CD4-positive, alpha-beta T cell (primary cell): ENCODE measurements at regions of chr9 and their contacts with region 1.

Region 1: GRCh38 chr9:105414947-105415661 is 32.7 kb upstream of the FSD1L start:
- DNase-seq: peak; percentile 19 to 84 (median 48)
- ATAC-seq: peak; percentile 86
- H3K4me3 ChIP-seq: no peak overlapping the region
- H3K4me3 Mint-ChIP-seq: no peak overlapping the region
- H3K27ac ChIP-seq: no peak overlapping the region
- H3K27ac Mint-ChIP-seq: no peak overlapping the region
- H3K4me1 ChIP-seq: peaks cover 3% of the 10 kb centered on the region
- H3K4me1 Mint-ChIP-seq: peaks cover 4% of the 10 kb centered on the region
- H3K27me3 ChIP-seq: peaks cover 9 to 19% of the 10 kb centered on the region in 2 experiments
- H3K27me3 Mint-ChIP-seq: peaks cover 51% of the 10 kb centered on the region
- CTCF ChIP-seq: peak; percentile 94

Region 2: DNA sequence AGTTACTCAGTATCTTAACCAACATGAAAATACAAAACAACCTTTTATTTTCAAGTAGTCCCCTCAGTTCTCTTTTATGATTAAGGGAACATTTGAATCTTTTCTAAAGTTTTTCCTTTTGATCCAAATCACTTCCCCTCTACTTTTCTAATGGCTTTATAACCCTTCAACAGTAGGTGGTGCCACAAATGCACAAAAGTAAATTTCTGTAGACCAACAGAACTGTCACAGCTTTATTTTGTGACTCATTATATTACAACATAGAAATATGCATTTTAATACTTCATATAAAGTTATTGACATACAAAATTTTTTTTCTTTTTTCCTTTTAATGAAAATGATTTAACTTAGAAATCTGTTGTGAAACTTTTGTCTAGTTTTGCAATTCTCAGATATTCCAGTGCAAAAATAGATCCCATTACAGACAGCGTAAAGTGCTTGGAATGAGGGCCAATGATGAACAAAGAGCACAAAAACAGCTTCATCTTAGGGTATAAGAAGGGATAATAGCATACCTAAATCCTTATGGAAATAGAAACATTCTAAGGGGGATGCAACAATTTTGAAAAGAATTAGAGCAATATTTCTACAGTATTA is 634.2 kb before region 1 on chr9:
- CTCF ChIA-PET with region 1: no interaction called
- POLR2A ChIA-PET with region 1: no interaction called
- intact Hi-C with region 1: loop called in 1 of 2 experiments (anchors 10 kb)
- DNase-seq: peak in 2 of 14 experiments; percentile 40 to 42
- ATAC-seq: no peak
- H3K4me3 ChIP-seq: no peak overlapping the region
- H3K4me3 Mint-ChIP-seq: no peak overlapping the region
- H3K27ac ChIP-seq: no peak overlapping the region
- H3K27ac Mint-ChIP-seq: no peak overlapping the region
- H3K4me1 ChIP-seq: no peaks in the 10 kb centered on the region
- H3K4me1 Mint-ChIP-seq: no peaks in the 10 kb centered on the region
- H3K27me3 ChIP-seq: no peaks in the 10 kb centered on the region
- H3K27me3 Mint-ChIP-seq: no peaks in the 10 kb centered on the region
- CTCF ChIP-seq: peak; percentile 34

Region 3: GRCh38 chr9:104808035-104808614 is 607.0 kb before region 1 on chr9:
- CTCF ChIA-PET with region 1: no interaction called
- POLR2A ChIA-PET with region 1: no interaction called
- intact Hi-C with region 1: loop called in 1 of 2 experiments (anchors 10 kb)
- DNase-seq: peak in 2 of 14 experiments; percentile 4 to 13
- ATAC-seq: no peak
- H3K4me3 ChIP-seq: no peak overlapping the region
- H3K4me3 Mint-ChIP-seq: no peak overlapping the region
- H3K27ac ChIP-seq: no peak overlapping the region
- H3K27ac Mint-ChIP-seq: no peak overlapping the region
- H3K4me1 ChIP-seq: no peaks in the 10 kb centered on the region
- H3K4me1 Mint-ChIP-seq: no peaks in the 10 kb centered on the region
- H3K27me3 ChIP-seq: no peaks in the 10 kb centered on the region
- H3K27me3 Mint-ChIP-seq: no peaks in the 10 kb centered on the region
- CTCF ChIP-seq: no peak

Region 4: GRCh38 chr9:104863180-104863883 is 551.8 kb before region 1 on chr9:
- CTCF ChIA-PET with region 1: interaction called, 10 read pairs
- POLR2A ChIA-PET with region 1: interaction called, 3 read pairs
- intact Hi-C with region 1: loop called (anchors 1 kb)
- DNase-seq: peak; percentile 9 to 78 (median 32)
- ATAC-seq: peak; percentile 92
- H3K4me3 ChIP-seq: no peak overlapping the region
- H3K4me3 Mint-ChIP-seq: no peak overlapping the region
- H3K27ac ChIP-seq: no peak overlapping the region
- H3K27ac Mint-ChIP-seq: no peak overlapping the region
- H3K4me1 ChIP-seq: no peaks in the 10 kb centered on the region
- H3K4me1 Mint-ChIP-seq: peaks cover 12% of the 10 kb centered on the region
- H3K27me3 ChIP-seq: no peaks in the 10 kb centered on the region
- H3K27me3 Mint-ChIP-seq: no peaks in the 10 kb centered on the region
- CTCF ChIP-seq: peak; percentile 77

Region 5: GRCh38 chr9:104927912-104928740 is 487.0 kb before region 1 on chr9 and contains the start of gene ABCA1:
- CTCF ChIA-PET with region 1: interaction called, 3 read pairs
- POLR2A ChIA-PET with region 1: no interaction called
- intact Hi-C with region 1: loop called (anchors 1 to 2 kb)
- DNase-seq: peak; percentile 57 to 89 (median 74)
- ATAC-seq: peak; percentile 81
- H3K4me3 ChIP-seq: peak within 1 kb of the TSS; percentile 69
- H3K4me3 Mint-ChIP-seq: peak within 1 kb of the TSS; percentile 92
- H3K27ac ChIP-seq: peak within 1 kb of the TSS in 1 of 2 donors; percentile 15
- H3K27ac Mint-ChIP-seq: peak within 1 kb of the TSS; percentile 86
- H3K4me1 ChIP-seq: peaks cover 27% of the 10 kb centered on the region
- H3K4me1 Mint-ChIP-seq: peaks cover 26% of the 10 kb centered on the region
- H3K27me3 ChIP-seq: no peaks in the 10 kb centered on the region
- H3K27me3 Mint-ChIP-seq: no peaks in the 10 kb centered on the region
- CTCF ChIP-seq: no peak
- total RNA-seq, gene ABCA1: 14.1 to 16.9 TPM

Region 6: GRCh38 chr9:105157130-105157583 is 257.9 kb before region 1 on chr9:
- CTCF ChIA-PET with region 1: interaction called, 4 read pairs
- POLR2A ChIA-PET with region 1: no interaction called
- intact Hi-C with region 1: loop called (anchors 1 to 2 kb)
- DNase-seq: peak in 8 of 14 experiments; percentile 1 to 68 (median 30)
- ATAC-seq: peak; percentile 80
- H3K4me3 ChIP-seq: no peak overlapping the region
- H3K4me3 Mint-ChIP-seq: no peak overlapping the region
- H3K27ac ChIP-seq: no peak overlapping the region
- H3K27ac Mint-ChIP-seq: no peak overlapping the region
- H3K4me1 ChIP-seq: peaks cover 12% of the 10 kb centered on the region
- H3K4me1 Mint-ChIP-seq: peaks cover 34% of the 10 kb centered on the region
- H3K27me3 ChIP-seq: no peaks in the 10 kb centered on the region
- H3K27me3 Mint-ChIP-seq: no peaks in the 10 kb centered on the region
- CTCF ChIP-seq: peak; percentile 72

Region 7: GRCh38 chr9:105392531-105392930 is 22.6 kb before region 1 on chr9:
- CTCF ChIA-PET with region 1: no interaction called
- POLR2A ChIA-PET with region 1: no interaction called
- intact Hi-C with region 1: no loop called
- DNase-seq: no peak
- ATAC-seq: no peak
- H3K4me3 ChIP-seq: no peak overlapping the region
- H3K4me3 Mint-ChIP-seq: no peak overlapping the region
- H3K27ac ChIP-seq: no peak overlapping the region
- H3K27ac Mint-ChIP-seq: no peak overlapping the region
- H3K4me1 ChIP-seq: no peaks in the 10 kb centered on the region
- H3K4me1 Mint-ChIP-seq: no peaks in the 10 kb centered on the region
- H3K27me3 ChIP-seq: no peaks in the 10 kb centered on the region
- H3K27me3 Mint-ChIP-seq: peaks cover 29% of the 10 kb centered on the region
- CTCF ChIP-seq: no peak